ENCODE measurements at regions of chr6 and their contacts with region 1.

Region 1: DNA sequence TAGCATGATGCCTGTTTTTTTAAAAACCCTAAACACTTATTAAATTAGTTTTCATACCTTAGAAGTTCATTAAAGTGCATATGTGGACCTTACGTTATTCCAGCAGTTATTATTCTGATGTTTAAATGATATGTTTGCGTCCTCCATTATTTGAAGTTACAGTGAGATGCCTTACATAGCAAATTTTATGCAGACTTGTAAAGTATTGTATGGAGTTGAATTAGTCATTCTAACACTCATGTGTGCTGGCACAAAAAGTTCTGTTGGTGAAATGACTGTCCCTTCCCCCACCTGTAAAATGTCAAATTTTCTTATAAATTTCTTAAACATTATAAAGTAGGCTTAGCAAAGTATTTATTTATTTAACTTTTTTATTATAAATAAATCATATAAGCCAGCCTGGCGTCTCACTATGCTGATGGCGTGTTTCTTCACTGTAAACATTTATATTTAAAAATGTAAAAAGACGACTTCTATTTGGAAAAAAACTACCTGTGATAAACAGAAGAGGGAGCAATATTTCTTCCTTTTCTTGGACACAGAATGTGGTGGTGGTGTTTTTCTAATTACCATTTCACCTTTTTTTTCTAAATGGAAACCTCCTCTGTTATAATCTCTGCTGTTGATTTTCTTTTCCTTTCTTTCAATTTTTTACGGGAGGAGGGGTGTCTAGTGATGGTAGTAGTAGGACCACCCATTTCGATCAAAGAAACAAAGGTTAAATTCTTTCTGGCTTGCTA is 155.4 kb downstream of the RFPL4B start:
- DNase-seq: no peak
- H3K4me3 Mint-ChIP-seq: no peak overlapping the region
- H3K27ac Mint-ChIP-seq: no peak overlapping the region
- H3K4me1 Mint-ChIP-seq: no peaks in the 10 kb centered on the region
- H3K27me3 Mint-ChIP-seq: peaks cover 3% of the 10 kb centered on the region

Region 2: GRCh38 chr6:112480553-112480952 is 22.0 kb before region 1 on chr6:
- intact Hi-C with region 1: no loop called
- DNase-seq: no peak
- H3K4me3 Mint-ChIP-seq: no peak overlapping the region
- H3K27ac Mint-ChIP-seq: no peak overlapping the region
- H3K4me1 Mint-ChIP-seq: no peaks in the 10 kb centered on the region
- H3K27me3 Mint-ChIP-seq: no peaks in the 10 kb centered on the region

Region 3: DNA sequence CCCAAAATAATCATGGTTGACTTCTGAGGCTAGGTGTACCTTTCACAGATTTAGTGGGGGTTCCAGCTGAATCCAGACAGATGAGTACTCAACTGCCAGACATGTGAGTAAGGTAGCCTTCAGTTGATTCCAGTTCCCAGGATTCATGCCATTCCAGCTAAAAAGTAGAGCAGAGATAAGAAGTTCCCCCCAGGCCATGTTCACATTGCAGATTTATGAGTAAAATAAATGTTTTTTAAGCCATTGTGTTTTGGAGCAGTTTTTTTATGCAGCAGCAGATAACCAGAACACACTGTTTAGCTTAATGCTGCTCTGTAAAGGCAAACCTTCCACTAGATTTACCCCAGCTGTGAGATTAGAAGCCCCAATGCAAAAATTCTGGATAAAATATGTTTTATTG is 89.6 kb after region 1 on chr6:
- intact Hi-C with region 1: loop called (anchors 5 kb)
- DNase-seq: no peak
- H3K4me3 Mint-ChIP-seq: no peak overlapping the region
- H3K27ac Mint-ChIP-seq: no peak overlapping the region
- H3K4me1 Mint-ChIP-seq: no peaks in the 10 kb centered on the region
- H3K27me3 Mint-ChIP-seq: no peaks in the 10 kb centered on the region

Region 4: GRCh38 chr6:112683926-112684325 is 181.4 kb after region 1 on chr6:
- intact Hi-C with region 1: no loop called
- DNase-seq: no peak
- H3K4me3 Mint-ChIP-seq: no peak overlapping the region
- H3K27ac Mint-ChIP-seq: no peak overlapping the region
- H3K4me1 Mint-ChIP-seq: no peaks in the 10 kb centered on the region
- H3K27me3 Mint-ChIP-seq: no peaks in the 10 kb centered on the region